Ascending aorta (tissue), 2 donors: ENCODE measurements at regions of chr6 and their contacts with region 1.

Region 1: DNA sequence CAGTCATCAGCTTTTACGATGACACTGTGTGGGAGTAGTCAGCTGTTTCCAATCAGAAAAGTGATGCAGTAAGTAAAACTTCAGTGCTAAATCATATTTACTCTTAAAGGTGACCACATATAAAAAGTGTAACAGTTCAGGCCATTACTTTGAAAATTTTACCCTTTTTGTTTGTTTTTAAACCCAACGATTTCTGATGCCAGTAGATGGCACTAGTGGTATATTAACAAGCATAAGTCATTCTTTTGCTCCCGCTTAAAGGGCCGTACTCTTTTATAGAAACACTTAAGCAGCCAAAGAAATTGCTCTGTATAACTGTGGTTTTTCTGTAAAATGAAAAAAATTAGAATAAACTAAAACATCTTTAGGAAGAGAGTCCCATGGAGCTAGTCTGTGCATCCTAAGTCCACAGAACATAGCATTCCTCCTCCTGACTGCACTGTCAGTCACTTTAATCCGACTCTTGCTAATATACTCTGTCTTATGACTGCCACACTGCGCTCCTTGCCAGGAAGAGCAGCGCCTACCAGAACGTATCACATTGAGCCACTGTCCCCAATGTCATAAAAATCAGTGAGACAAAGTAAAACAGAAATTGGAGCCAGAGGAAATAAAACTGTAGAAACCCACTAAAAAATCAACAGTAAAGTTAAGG is 25.0 kb downstream of the HEBP2 start:
- DNase-seq: no peak
- H3K4me3 ChIP-seq: no peak overlapping the region
- H3K27ac ChIP-seq: no peak overlapping the region
- H3K4me1 ChIP-seq: no peaks in the 10 kb centered on the region
- H3K27me3 ChIP-seq: no peaks in the 10 kb centered on the region
- CTCF ChIP-seq: peak; percentile 32 to 62 (median 51)

Region 2: DNA sequence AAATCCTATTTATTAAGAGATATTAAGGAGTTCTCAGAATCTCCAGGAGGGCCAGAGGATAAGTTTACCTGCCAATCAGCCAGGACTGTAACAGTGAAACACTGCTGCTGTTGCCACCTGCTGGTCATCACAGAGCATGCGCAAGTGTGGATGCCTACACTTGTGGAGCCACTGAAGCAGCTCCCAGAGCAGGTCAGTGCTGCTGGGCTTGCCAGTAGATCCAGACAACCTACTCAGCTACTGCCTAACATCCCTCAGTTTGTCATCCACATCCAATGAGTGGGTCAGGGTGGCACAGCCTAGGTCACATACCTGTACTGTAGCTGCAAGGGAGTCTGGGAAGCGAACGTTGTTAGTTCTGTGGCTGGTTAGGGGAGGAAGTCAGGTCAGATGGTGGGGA is 88.6 kb after region 1 on chr6:
- intact Hi-C with region 1: loop called (anchors 5 kb)
- DNase-seq: no peak
- H3K4me3 ChIP-seq: no peak overlapping the region
- H3K27ac ChIP-seq: no peak overlapping the region
- H3K4me1 ChIP-seq: no peaks in the 10 kb centered on the region
- H3K27me3 ChIP-seq: no peaks in the 10 kb centered on the region
- CTCF ChIP-seq: peak in 2 of 3 experiments; percentile 54 to 59

Region 3: DNA sequence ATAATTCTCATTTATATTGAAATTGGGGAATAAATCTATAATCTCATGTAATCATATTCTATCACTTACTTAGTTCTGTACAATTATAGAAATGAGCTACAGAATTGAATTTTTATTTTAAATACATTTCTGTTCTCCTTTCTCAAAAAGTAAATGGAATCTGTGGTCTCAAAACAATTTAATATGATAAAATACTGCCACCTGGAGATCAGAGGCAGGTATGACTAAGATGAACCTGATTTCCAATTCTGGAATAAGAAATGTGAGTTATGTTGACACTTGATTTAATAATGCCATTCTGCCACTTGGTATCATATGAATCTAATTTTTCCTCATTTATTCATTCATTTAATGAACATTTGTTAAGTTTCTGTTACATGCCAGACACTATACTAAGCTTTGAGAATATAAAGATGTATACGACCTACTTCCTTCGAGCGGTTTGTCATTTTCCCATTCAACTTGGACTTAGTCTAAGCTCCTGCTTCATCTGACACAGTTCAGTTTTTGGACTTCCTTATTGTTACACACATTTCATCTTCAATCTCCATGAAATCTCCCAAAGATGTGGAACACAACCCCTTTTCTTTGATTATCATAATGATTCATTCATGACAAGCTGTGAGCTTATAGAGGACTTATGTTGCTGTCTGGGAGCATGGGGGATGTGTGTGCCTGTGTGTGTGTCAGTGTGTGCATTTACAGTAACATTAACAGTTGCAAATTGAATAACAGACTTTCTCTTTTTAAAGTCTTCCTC is 337.0 kb after region 1 on chr6:
- intact Hi-C with region 1: loop called (anchors 5 kb)
- DNase-seq: no peak
- H3K4me3 ChIP-seq: no peak overlapping the region
- H3K27ac ChIP-seq: no peak overlapping the region
- H3K4me1 ChIP-seq: no peaks in the 10 kb centered on the region
- H3K27me3 ChIP-seq: no peaks in the 10 kb centered on the region
- CTCF ChIP-seq: peak; percentile 48 to 61 (median 49)

Region 4: DNA sequence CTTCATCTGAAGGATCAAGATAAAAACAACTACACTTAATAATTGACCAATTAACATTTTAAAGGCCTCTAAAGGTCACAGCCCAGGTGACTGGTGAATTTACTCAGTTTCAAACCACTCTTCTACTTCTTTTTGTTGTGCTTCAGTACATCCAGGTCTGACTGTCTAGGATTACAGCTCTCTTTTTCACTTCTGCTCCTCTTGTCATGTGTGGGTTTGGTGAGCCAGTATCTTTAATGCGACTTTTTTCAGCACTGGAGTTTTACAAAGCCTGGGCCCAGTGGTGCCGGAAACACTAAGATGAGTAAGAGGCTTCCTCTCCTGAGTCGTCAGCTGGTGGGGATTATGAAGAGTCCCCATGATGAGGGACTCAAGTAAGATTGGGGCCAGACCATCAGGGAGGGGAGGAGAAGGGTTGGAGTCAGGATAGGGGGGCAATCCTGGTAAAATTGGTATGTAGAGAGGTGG is 732.8 kb after region 1 on chr6:
- intact Hi-C with region 1: no loop called
- DNase-seq: no peak
- H3K4me3 ChIP-seq: no peak overlapping the region
- H3K27ac ChIP-seq: no peak overlapping the region
- H3K4me1 ChIP-seq: peaks cover 0 to 6% of the 10 kb centered on the region in 2 donors
- H3K27me3 ChIP-seq: no peaks in the 10 kb centered on the region
- CTCF ChIP-seq: no peak